Prostate gland (tissue), 2 donors: ENCODE measurements at regions of chr6 and their contacts with region 1.

Region 1: DNA sequence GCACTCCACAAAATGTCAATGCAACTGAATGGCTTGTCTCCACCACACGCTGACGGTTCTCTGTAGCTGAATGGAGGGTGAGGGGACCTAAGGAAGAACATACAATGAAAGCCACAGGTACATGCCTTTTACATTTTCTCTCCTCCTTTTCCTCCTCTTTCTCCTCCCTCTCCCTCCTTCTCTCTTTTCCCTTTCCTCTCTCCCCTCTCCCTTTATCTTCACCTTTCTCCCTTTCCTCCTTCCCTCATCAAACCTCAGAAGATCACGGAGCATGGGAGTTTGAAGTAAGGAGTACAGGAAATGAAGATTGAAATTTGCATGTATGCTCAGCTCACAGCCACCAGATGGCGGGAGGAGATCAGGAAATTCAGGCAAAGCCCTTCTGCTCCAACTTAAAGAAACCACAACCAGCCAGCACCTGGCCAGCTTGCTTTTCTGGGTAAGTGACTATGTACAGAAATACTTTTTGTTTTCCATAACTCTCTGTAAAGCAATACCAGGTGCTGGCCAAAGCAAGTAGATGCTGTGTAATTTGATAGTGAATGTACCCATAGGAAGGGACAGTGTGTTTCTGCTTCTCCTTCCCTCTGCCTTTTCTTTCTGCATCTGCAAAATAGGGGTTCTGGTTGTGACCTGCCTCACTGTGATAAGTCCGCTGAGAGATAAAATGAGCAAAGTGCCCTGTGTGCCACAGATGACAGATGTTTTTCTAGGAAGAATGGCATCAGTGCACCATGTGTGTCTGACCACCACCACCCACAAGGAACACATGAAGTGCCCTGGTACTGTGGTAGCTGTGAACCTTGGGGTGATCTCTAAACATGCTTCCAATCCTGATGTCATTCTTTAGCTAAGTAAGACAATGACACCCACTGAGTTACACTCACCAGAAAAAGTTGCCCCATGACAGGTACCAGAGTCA is 18.6 kb upstream of the FOXO3 start:
- DNase-seq: peak; percentile 77
- H3K4me3 ChIP-seq: no peak overlapping the region
- H3K27ac ChIP-seq: no peak overlapping the region
- H3K4me1 ChIP-seq: no peaks in the 10 kb centered on the region
- H3K27me3 ChIP-seq: no peaks in the 10 kb centered on the region
- CTCF ChIP-seq: peak; percentile 61 to 97 (median 94)
- POLR2A ChIP-seq: no peak

Region 2: GRCh38 chr6:108407904-108408827 is 133.9 kb before region 1 on chr6:
- intact Hi-C with region 1: no loop called
- DNase-seq: no peak
- H3K4me3 ChIP-seq: no peak overlapping the region
- H3K27ac ChIP-seq: no peak overlapping the region
- H3K4me1 ChIP-seq: no peaks in the 10 kb centered on the region
- H3K27me3 ChIP-seq: no peaks in the 10 kb centered on the region
- CTCF ChIP-seq: no peak
- POLR2A ChIP-seq: no peak

Region 3: GRCh38 chr6:108730635-108731525 is 188.8 kb after region 1 on chr6:
- intact Hi-C with region 1: no loop called
- DNase-seq: no peak
- H3K4me3 ChIP-seq: no peak overlapping the region
- H3K27ac ChIP-seq: no peak overlapping the region
- H3K4me1 ChIP-seq: no peaks in the 10 kb centered on the region
- H3K27me3 ChIP-seq: no peaks in the 10 kb centered on the region
- CTCF ChIP-seq: no peak
- POLR2A ChIP-seq: no peak

Region 4: GRCh38 chr6:108782179-108783041 is 240.3 kb after region 1 on chr6:
- intact Hi-C with region 1: loop called (anchors 2 kb)
- DNase-seq: peak; percentile 90
- H3K4me3 ChIP-seq: peak overlapping the region; percentile 35 to 39
- H3K27ac ChIP-seq: peak overlapping the region; percentile 63 to 67
- H3K4me1 ChIP-seq: peaks cover 3% of the 10 kb centered on the region
- H3K27me3 ChIP-seq: no peaks in the 10 kb centered on the region
- CTCF ChIP-seq: peak; percentile 55 to 81 (median 80)
- POLR2A ChIP-seq: no peak

Region 5: GRCh38 chr6:108896111-108896661 is 354.1 kb after region 1 on chr6:
- intact Hi-C with region 1: loop called (anchors 1 kb)
- DNase-seq: no peak
- H3K4me3 ChIP-seq: no peak overlapping the region
- H3K27ac ChIP-seq: no peak overlapping the region
- H3K4me1 ChIP-seq: no peaks in the 10 kb centered on the region
- H3K27me3 ChIP-seq: no peaks in the 10 kb centered on the region
- CTCF ChIP-seq: no peak
- POLR2A ChIP-seq: no peak